Activated T-helper 2 cell treated with anti-CD3 and anti-CD28 coated beads, Interferon-gamma antibody, Interleukin-2, Interleukin-4, amounts not matched to agents 10 μg/mL and 5 μg/mL and 100 μg/mL, durations not matched to agents 14 hours and 24 hours and 36 hours (primary cell): ENCODE measurements at regions of chr7 and their contacts with region 1.

Region 1: DNA sequence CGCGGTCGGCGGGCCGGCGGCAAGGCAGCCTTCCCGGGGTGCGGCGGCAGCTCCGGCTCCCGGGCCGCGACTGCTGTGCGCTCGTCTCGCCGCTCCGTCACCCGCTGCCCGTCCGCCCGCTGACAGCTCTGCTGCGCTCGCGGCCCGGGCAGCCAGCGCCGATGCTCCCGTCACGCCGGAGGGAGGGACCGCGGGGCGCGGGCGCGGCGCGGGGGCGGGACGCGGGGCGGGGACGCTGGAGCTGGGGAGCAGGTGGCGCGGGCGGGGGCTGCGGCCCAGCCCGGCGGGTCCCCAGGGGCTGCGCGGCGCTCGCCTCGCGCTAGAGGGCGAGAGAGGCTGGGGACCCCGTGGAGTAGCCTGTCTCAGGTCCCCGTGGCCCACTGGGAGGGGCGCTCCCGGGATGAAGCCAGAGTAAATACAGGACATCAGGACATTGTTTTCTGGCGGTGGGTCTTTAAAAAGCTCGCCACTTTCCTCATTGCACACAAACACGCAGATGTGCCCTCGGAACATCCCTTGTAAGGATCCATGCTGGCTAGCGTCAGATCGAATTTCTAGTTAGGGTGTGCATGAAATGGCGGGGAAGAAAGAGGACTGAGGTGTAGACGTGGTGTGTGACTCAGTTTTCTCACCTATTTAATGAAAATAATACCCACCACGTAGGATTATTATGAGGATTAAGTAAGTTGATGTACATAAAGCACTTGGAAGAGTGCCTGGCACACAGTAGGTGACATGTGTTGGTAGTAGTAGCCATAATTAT is at the start of gene ELAPOR2:
- DNase-seq: peak; percentile 71
- H3K4me3 Mint-ChIP-seq: peak within 1 kb of the TSS; percentile 71
- H3K27ac Mint-ChIP-seq: no peak within 1 kb of the TSS
- H3K4me1 Mint-ChIP-seq: peaks cover 11% of the 10 kb centered on the region
- H3K27me3 Mint-ChIP-seq: peaks cover 17% of the 10 kb centered on the region
- total RNA-seq, gene ELAPOR2: 2.4 and 2.7 TPM in 2 replicates

Region 2: DNA sequence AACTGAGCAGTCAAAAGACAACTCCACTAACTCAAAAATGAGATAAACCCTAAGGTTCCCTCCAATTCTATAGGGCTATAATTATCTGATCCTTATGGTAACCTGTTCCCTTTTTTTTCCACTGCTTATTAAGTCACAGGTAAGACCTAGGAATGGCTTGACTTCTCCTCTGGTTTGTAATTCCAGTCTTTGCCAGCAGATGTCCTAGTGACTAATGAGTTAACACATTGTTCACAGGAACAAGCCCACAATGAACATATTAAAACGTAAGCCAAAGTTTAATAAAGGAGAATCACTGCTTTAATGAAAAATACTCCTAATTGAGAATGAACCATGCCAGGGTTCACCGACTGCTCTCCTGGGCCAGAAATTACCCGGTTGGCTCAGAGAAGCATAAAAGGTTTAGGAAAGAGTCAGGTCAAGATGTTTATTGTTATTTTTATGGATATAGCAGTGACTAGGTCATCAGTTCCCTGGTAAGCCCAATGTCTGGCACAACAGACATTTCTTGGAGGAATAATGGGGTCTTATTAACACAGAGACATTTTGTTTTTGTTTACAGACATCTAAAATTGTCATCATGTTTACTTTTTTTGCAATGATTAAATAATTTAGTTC is 120.4 kb before region 1 on chr7:
- intact Hi-C with region 1: loop called (anchors 5 kb)
- DNase-seq: no peak
- H3K4me3 Mint-ChIP-seq: no peak overlapping the region
- H3K27ac Mint-ChIP-seq: no peak overlapping the region
- H3K4me1 Mint-ChIP-seq: no peaks in the 10 kb centered on the region
- H3K27me3 Mint-ChIP-seq: peaks cover 13% of the 10 kb centered on the region

Region 3: GRCh38 chr7:87075671-87076404 is 16.1 kb after region 1 on chr7:
- intact Hi-C with region 1: no loop called
- DNase-seq: no peak
- H3K4me3 Mint-ChIP-seq: no peak overlapping the region
- H3K27ac Mint-ChIP-seq: no peak overlapping the region
- H3K4me1 Mint-ChIP-seq: peaks cover 2% of the 10 kb centered on the region
- H3K27me3 Mint-ChIP-seq: peaks cover 15% of the 10 kb centered on the region

Region 4: DNA sequence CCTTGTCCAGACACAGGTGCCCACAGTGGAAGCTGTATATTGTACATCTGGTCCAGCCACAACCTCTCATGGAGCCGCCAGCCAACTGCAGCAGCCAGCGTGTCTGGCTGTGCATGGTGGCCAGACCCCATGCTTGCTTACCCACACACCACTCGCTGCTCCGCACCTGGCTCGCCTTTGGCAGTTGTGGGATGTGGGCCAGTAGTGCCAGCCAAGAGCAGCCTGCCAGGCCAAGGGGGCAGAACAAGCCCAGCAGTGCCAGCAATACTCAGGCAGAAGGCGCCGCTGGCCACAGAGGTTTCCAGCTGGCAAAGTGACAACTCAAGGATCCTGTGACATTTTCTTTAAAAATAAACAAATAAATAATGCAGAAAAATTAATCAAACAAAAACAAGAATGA is 171.6 kb after region 1 on chr7:
- intact Hi-C with region 1: loop called (anchors 5 kb)
- DNase-seq: no peak
- H3K4me3 Mint-ChIP-seq: no peak overlapping the region
- H3K27ac Mint-ChIP-seq: no peak overlapping the region
- H3K4me1 Mint-ChIP-seq: peaks cover 5% of the 10 kb centered on the region
- H3K27me3 Mint-ChIP-seq: peaks cover 18% of the 10 kb centered on the region